ENCODE measurements at regions of chr2 and their contacts with region 1.

Region 1: DNA sequence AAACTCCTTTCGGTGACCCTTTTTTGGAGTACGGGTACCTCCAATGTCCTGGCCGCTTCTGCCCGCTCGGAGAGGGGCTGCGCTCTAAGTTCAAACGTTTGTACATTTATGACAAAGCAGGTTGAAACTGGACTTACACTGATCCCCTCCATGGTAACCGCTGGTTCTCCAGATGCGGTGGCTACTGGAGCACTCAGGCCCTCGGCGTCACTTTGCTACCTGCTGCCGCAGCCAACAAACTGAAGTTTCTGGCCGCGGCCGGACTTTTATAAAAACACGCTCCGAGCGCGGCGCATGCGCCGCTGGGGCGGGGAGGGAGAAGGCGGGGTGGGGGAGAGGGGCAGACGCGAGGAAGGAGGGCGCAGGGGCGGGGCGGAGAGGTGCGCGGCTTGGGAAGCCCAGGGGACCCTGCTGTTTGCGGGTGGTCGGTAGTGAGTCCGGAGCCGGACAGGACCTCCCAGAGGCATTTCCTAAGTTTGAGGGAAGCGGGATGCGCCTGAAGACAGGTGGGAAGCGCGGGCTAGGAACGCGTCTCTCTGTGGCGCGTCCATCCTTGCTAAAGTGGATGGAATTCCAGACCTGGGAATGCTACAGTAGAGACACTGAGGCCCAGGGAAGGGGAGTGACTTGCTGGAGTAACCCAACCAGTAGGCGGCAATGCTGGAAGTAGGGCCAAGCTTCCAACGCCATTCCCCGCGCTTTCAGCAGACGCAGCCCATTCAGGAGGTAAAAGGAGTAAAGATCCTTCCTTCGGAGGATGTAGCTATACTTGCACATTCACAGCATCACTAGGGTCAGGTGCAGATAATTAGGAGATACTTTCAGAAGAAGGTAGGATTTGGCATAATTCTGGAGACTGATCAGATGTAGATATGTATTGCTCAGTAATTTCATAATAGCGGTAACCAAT is at the start of gene CXCR4:
- ATAC-seq: peak; percentile 37 to 74 (median 66)
- H3K4me3 ChIP-seq: peak within 1 kb of the TSS; percentile 47 to 89 (median 59)
- H3K27ac ChIP-seq: peak within 1 kb of the TSS; percentile 41 to 56
- H3K4me1 ChIP-seq: peaks cover 12 to 20% of the 10 kb centered on the region in 2 donors
- total RNA-seq, gene CXCR4: 0.36 to 112 (median 32.3) TPM

Region 2: GRCh38 chr2:135585586-135585985 is 532.6 kb before region 1 on chr2:
- in situ Hi-C with region 1: no loop called
- ATAC-seq: peak in 7 of 8 experiments; percentile 4 to 35 (median 26)
- H3K4me3 ChIP-seq: peak overlapping the region in 1 of 5 donors; percentile 25
- H3K27ac ChIP-seq: no peak overlapping the region
- H3K4me1 ChIP-seq: peaks cover 0 to 10% of the 10 kb centered on the region in 2 donors

Region 3: GRCh38 chr2:135985018-135985825 is 132.9 kb before region 1 on chr2 and contains the start of gene DARS1:
- in situ Hi-C with region 1: loop called in 1 of 9 experiments (anchors 10 kb)
- ATAC-seq: peak; percentile 91 to 96 (median 95)
- H3K4me3 ChIP-seq: peak within 1 kb of the TSS; percentile 48 to 74 (median 69)
- H3K27ac ChIP-seq: peak within 1 kb of the TSS; percentile 93 to 95
- H3K4me1 ChIP-seq: peaks cover 12 to 21% of the 10 kb centered on the region in 2 donors
- total RNA-seq, gene DARS1: 55.2 to 83.2 (median 63.1) TPM

Region 4: GRCh38 chr2:136407952-136408318 is 289.8 kb after region 1 on chr2:
- in situ Hi-C with region 1: no loop called
- ATAC-seq: no peak
- H3K4me3 ChIP-seq: no peak overlapping the region
- H3K27ac ChIP-seq: no peak overlapping the region
- H3K4me1 ChIP-seq: no peaks in the 10 kb centered on the region